ENCODE measurements at regions of chr9 and their contacts with region 1.

Region 1: DNA sequence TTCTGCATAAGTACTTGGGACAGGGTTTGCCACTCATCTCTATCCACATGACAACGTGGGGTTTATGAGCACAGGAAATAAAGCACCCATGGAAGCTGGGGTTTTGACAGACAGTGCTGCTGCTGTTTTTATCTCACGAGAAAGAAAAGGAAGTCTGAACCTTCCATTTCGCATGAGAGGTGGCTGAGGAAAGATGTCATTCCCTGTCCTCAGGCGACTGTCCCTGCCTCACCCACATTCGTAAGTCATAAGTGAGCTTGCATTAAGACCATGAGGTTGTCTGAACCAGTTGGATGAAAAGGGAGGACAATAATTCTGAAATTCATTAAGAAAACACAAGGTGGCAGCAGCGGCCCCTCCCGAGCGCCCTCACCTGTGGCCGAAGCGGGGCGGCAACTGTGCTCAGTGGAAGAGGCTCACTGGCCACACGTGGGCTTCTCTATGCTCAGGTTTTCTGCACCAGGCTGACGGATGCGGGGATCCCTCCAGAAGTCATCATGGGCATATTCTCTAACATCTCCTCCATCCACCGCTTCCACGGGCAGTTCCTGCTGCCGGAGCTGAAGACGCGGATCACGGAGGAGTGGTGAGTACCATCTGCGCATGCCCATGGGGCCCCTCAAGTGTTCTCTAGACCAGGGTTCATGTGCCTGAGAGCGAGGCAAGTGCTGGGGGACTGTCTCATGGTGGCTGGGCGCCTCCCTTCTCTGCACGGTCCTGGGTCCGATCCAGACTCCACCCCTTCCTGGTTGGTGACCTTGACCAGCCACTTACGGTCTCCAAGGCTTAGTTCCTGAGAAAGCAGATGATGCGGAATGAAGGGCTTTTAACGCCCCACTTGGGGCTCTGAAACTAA is 54.7 kb upstream of the SUSD3 start:
- DNase-seq: peak; percentile 76
- ATAC-seq: peak; percentile 88
- H3K4me3 Mint-ChIP-seq: no peak overlapping the region
- H3K27ac Mint-ChIP-seq: peak overlapping the region; percentile 83
- H3K4me1 Mint-ChIP-seq: peaks cover 46% of the 10 kb centered on the region
- H3K27me3 Mint-ChIP-seq: no peaks in the 10 kb centered on the region

Region 2: GRCh38 chr9:92512622-92513021 is 491.2 kb before region 1 on chr9:
- CTCF ChIA-PET with region 1: no interaction called
- POLR2A ChIA-PET with region 1: no interaction called
- DNase-seq: no peak
- ATAC-seq: no peak
- H3K4me3 Mint-ChIP-seq: no peak overlapping the region
- H3K27ac Mint-ChIP-seq: no peak overlapping the region
- H3K4me1 Mint-ChIP-seq: no peaks in the 10 kb centered on the region
- H3K27me3 Mint-ChIP-seq: no peaks in the 10 kb centered on the region

Region 3: DNA sequence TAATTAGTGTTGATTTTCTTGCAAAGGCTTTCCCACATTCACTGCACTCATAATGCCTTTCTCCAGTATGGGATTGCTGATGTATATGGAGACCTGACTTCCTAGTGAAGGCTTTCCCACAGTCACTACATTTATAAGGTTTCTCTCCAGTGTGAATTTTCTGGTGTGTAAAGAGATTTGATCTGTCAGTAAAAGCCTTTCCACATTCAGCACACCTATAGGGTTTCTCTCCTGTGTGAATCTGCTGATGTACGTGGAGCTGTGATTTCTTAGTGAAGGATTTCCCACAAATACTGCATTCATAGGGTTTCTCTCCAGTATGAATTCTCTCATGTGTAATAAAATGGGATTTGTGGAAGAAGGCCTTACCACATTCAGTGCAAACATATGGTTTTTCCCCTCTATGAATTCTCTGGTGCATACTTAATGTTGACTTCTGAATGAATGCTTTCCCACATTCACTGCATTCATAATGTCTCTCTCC is 157.1 kb before region 1 on chr9:
- CTCF ChIA-PET with region 1: no interaction called
- POLR2A ChIA-PET with region 1: no interaction called
- DNase-seq: no peak
- ATAC-seq: no peak
- H3K4me3 Mint-ChIP-seq: no peak overlapping the region
- H3K27ac Mint-ChIP-seq: no peak overlapping the region
- H3K4me1 Mint-ChIP-seq: no peaks in the 10 kb centered on the region
- H3K27me3 Mint-ChIP-seq: no peaks in the 10 kb centered on the region

Region 4: GRCh38 chr9:92897323-92897722 is 106.5 kb before region 1 on chr9:
- CTCF ChIA-PET with region 1: no interaction called
- POLR2A ChIA-PET with region 1: no interaction called
- DNase-seq: no peak
- ATAC-seq: no peak
- H3K4me3 Mint-ChIP-seq: no peak overlapping the region
- H3K27ac Mint-ChIP-seq: no peak overlapping the region
- H3K4me1 Mint-ChIP-seq: peaks cover 3% of the 10 kb centered on the region
- H3K27me3 Mint-ChIP-seq: peaks cover 5% of the 10 kb centered on the region

Region 5: DNA sequence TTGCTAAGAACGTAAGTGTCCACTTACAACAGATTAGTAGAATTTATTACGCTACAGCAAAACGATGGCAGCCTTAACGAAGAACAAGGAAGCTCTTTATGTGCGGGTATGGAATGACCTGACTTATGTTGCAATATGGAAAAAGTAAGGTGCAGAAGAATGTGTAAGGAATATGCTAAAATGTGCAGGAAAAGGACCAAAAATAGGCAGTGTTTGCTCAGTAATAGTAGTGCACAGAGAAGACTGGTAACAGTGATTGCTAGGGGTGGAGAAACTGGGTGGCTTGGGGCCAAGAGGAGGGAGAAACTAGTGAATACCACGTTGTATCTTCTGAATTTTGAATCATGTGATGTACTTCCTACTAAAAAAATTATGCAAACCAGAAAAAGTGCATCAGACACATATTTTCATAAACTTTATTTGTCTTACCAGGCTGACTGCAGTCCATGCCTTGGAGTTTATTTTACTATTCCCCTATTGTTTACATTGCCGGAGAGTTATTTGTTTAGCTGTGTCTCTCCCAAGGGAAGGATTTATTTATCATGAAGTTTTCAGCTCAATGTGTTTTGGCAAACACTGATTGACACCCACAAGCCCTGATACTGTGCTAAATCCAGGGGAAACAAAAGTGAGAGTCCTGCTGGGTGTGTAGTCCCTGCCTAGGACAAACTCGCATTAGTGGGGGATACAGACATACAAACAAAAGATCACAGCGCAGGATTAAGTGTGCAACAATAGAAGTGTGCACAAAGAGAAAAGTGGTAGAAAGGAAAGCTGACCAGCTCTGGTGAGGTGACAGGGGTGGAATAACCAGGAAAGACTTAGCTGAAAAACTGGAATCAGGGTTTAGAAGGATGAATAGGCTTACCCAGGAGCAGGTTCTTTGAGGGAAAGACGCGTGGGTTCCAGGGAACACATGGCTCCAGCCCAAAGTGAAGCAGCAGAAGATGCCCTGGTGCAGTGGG is 92.0 kb before region 1 on chr9:
- CTCF ChIA-PET with region 1: no interaction called
- POLR2A ChIA-PET with region 1: no interaction called
- DNase-seq: no peak
- ATAC-seq: no peak
- H3K4me3 Mint-ChIP-seq: no peak overlapping the region
- H3K27ac Mint-ChIP-seq: no peak overlapping the region
- H3K4me1 Mint-ChIP-seq: no peaks in the 10 kb centered on the region
- H3K27me3 Mint-ChIP-seq: peaks cover 10% of the 10 kb centered on the region

Region 6: GRCh38 chr9:92954049-92954861 is 49.5 kb before region 1 on chr9:
- CTCF ChIA-PET with region 1: interaction called, 52 read pairs
- POLR2A ChIA-PET with region 1: interaction called, 6 read pairs
- DNase-seq: peak; percentile 86
- ATAC-seq: peak; percentile 89
- H3K4me3 Mint-ChIP-seq: peak overlapping the region; percentile 73
- H3K27ac Mint-ChIP-seq: peak overlapping the region; percentile 93
- H3K4me1 Mint-ChIP-seq: peaks cover 74% of the 10 kb centered on the region
- H3K27me3 Mint-ChIP-seq: peaks cover 3% of the 10 kb centered on the region

Region 7: GRCh38 chr9:92980085-92980745 is 23.6 kb before region 1 on chr9:
- CTCF ChIA-PET with region 1: interaction called, 31 read pairs
- POLR2A ChIA-PET with region 1: no interaction called
- DNase-seq: no peak
- ATAC-seq: peak; percentile 70
- H3K4me3 Mint-ChIP-seq: peak overlapping the region; percentile 51
- H3K27ac Mint-ChIP-seq: peak overlapping the region; percentile 87
- H3K4me1 Mint-ChIP-seq: peaks cover 57% of the 10 kb centered on the region
- H3K27me3 Mint-ChIP-seq: no peaks in the 10 kb centered on the region

Region 8: GRCh38 chr9:92992549-92992948 is 11.2 kb before region 1 on chr9:
- CTCF ChIA-PET with region 1: interaction called, 31 read pairs
- POLR2A ChIA-PET with region 1: no interaction called
- DNase-seq: no peak
- ATAC-seq: no peak
- H3K4me3 Mint-ChIP-seq: no peak overlapping the region
- H3K27ac Mint-ChIP-seq: no peak overlapping the region
- H3K4me1 Mint-ChIP-seq: peaks cover 77% of the 10 kb centered on the region
- H3K27me3 Mint-ChIP-seq: no peaks in the 10 kb centered on the region

Region 9: GRCh38 chr9:93020771-93021670 is 17.2 kb after region 1 on chr9:
- CTCF ChIA-PET with region 1: interaction called, 42 read pairs
- POLR2A ChIA-PET with region 1: no interaction called
- DNase-seq: peak; percentile 79
- ATAC-seq: peak; percentile 58
- H3K4me3 Mint-ChIP-seq: no peak overlapping the region
- H3K27ac Mint-ChIP-seq: peak overlapping the region; percentile 87
- H3K4me1 Mint-ChIP-seq: peaks cover 75% of the 10 kb centered on the region
- H3K27me3 Mint-ChIP-seq: no peaks in the 10 kb centered on the region

Region 10: GRCh38 chr9:93064392-93065134 is 60.8 kb after region 1 on chr9:
- CTCF ChIA-PET with region 1: interaction called, 18 read pairs
- POLR2A ChIA-PET with region 1: interaction called, 7 read pairs
- DNase-seq: peak; percentile 98
- ATAC-seq: peak; percentile 91
- H3K4me3 Mint-ChIP-seq: peak overlapping the region; percentile 79
- H3K27ac Mint-ChIP-seq: peak overlapping the region; percentile 96
- H3K4me1 Mint-ChIP-seq: peaks cover 87% of the 10 kb centered on the region
- H3K27me3 Mint-ChIP-seq: no peaks in the 10 kb centered on the region

Measured in activated CD8-positive, alpha-beta T cell treated with anti-CD3 and anti-CD28 coated beads, Interleukin-2, amount 10 ng/mL, durations not matched to agents 7 days and 5 days (primary cell).